Dendritic cell treated with granulocyte-macrophage colony-stimulating factor and Interleukin-4, amounts not matched to agents 40 ng/mL and 50 ng/mL, for 4 days (primary cell): ENCODE measurements at regions of chr1 and their contacts with region 1.

Region 1: DNA sequence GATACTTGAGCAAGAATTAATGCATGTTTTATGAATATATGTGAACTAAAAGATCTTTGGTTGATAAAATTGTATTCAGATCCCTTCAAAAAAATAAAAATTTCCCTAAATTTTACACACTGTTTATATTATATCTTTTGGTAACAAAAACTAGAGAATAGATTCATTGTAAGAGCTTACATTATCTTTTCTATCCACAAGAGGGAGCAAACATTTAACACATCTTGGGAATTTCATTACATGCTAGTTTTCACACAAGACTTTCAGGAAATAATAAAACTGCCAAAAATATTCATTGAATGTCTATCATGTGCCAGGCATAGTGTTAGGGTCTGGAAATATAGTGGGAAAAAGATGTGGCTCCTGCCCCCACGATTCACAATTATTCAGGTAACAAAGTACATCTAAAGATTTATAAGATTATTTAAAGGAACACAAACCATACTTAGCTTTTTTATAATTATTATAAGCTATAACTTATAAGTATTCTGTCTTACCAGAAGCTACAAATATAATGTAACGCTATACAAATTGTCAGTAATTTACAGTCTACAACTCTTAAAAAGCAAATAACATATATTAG is 30.6 kb downstream of the FAF1 start:
- H3K4me3 Mint-ChIP-seq: no peak overlapping the region
- H3K27ac Mint-ChIP-seq: no peak overlapping the region
- H3K4me1 Mint-ChIP-seq: peaks cover 11% of the 10 kb centered on the region
- H3K27me3 Mint-ChIP-seq: no peaks in the 10 kb centered on the region

Region 2: DNA sequence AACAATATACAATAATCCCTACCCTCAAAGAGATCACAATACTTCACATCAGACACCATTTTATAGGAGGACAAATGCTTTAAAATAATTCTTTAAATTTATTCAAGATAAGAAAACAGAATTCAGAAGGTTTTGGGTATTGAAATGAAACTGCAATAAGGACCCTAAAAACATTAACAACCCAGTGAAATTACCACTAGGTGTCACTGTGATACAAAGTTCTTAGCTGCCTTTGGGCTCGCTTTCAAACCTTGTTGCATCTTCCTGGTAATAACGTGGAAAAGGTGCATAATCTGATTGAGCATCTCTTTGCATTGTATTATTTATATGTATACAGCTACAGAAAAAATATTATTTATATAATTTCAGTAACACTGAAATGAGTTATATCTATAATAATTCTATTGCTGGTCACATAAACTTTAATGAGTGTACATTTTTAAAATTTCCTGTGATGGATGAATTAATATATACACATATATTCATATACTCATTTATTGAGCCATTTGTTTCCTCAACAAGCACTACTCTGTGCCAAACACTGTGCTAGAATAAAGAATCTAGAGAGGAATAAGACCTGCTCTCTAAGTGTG is 154.6 kb before region 1 on chr1:
- intact Hi-C with region 1: loop called (anchors 10 kb)
- H3K4me3 Mint-ChIP-seq: no peak overlapping the region
- H3K27ac Mint-ChIP-seq: no peak overlapping the region
- H3K4me1 Mint-ChIP-seq: peaks cover 4% of the 10 kb centered on the region
- H3K27me3 Mint-ChIP-seq: no peaks in the 10 kb centered on the region

Region 3: GRCh38 chr1:50968158-50968820 is 38.8 kb after region 1 on chr1:
- intact Hi-C with region 1: loop called (anchors 2 kb)
- H3K4me3 Mint-ChIP-seq: peak overlapping the region; percentile 96
- H3K27ac Mint-ChIP-seq: peak overlapping the region; percentile 95
- H3K4me1 Mint-ChIP-seq: peaks cover 26% of the 10 kb centered on the region
- H3K27me3 Mint-ChIP-seq: no peaks in the 10 kb centered on the region

Region 4: GRCh38 chr1:50978144-50978851 is 48.8 kb after region 1 on chr1:
- intact Hi-C with region 1: no loop called
- H3K4me3 Mint-ChIP-seq: peak overlapping the region; percentile 70
- H3K27ac Mint-ChIP-seq: peak overlapping the region; percentile 76
- H3K4me1 Mint-ChIP-seq: peaks cover 21% of the 10 kb centered on the region
- H3K27me3 Mint-ChIP-seq: peaks cover 41% of the 10 kb centered on the region

Region 5: GRCh38 chr1:51044834-51045233 is 115.4 kb after region 1 on chr1:
- intact Hi-C with region 1: loop called (anchors 10 kb)
- H3K4me3 Mint-ChIP-seq: no peak overlapping the region
- H3K27ac Mint-ChIP-seq: no peak overlapping the region
- H3K4me1 Mint-ChIP-seq: no peaks in the 10 kb centered on the region
- H3K27me3 Mint-ChIP-seq: peaks cover 9% of the 10 kb centered on the region